A673 (cell line): ENCODE measurements at regions of chr10 and their contacts with region 1.

Region 1: DNA sequence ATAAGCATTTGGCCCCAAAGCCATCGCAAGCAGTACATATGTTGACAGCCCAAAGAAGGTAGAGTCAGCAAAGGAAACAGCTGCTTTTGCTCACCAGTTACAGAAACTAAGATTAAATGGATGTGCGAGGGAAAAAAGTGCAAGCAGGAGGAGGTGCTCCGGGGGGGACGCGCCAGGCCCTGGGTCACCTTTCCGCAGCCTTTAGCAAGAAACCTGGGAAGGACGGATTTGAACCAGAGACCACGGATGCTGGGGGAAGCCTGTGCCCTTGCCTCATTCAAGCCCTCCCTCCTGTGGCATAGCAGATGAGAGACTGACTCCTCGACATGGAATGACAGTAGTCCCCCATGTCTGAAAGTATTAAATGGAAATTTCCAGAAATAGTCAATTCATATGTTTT is 405.6 kb upstream of the PRKCQ start:
- DNase-seq: no peak
- H3K4me3 ChIP-seq: no peak overlapping the region
- H3K27ac ChIP-seq: no peak overlapping the region
- H3K4me1 ChIP-seq: no peaks in the 10 kb centered on the region
- H3K27me3 ChIP-seq: peaks cover 48% of the 10 kb centered on the region
- CTCF ChIP-seq: no peak

Region 2: DNA sequence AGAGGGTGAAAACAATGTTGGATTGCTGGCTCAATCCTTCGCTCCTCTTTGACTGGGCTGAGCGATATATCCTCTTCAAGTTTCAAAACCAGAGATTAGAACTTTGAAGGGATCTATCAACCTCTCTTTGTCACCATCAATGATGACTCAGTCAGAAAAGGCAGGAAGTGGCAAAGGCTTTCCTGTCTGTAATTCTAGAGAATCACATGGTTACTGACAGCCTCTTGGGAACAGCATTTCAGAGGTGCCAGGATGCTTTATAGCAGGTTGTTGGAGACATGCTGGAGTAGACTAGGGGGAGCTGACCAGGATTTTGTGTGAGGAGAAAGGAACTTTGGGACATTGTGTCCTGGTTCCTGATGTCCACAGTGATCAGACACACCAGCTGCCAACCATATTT is 486.9 kb before region 1 on chr10:
- CTCF ChIA-PET with region 1: no interaction called
- POLR2A ChIA-PET with region 1: no interaction called
- intact Hi-C with region 1: no loop called
- DNase-seq: peak; percentile 17
- H3K4me3 ChIP-seq: no peak overlapping the region
- H3K27ac ChIP-seq: no peak overlapping the region
- H3K4me1 ChIP-seq: no peaks in the 10 kb centered on the region
- H3K27me3 ChIP-seq: peaks cover 98% of the 10 kb centered on the region
- CTCF ChIP-seq: no peak

Region 3: GRCh38 chr10:7501157-7501556 is 515.5 kb after region 1 on chr10:
- CTCF ChIA-PET with region 1: no interaction called
- POLR2A ChIA-PET with region 1: interaction called, 10 read pairs
- intact Hi-C with region 1: no loop called
- DNase-seq: no peak
- H3K4me3 ChIP-seq: no peak overlapping the region
- H3K27ac ChIP-seq: no peak overlapping the region
- H3K4me1 ChIP-seq: no peaks in the 10 kb centered on the region
- H3K27me3 ChIP-seq: peaks cover 16% of the 10 kb centered on the region
- CTCF ChIP-seq: no peak